T47D (cell line): ENCODE measurements at regions of chr3 and their contacts with region 1.

Region 1: GRCh38 chr3:193572426-193572908 is 17.8 kb upstream of the ATP13A4 start:
- DNase-seq: peak; percentile 72 to 93

Region 2: DNA sequence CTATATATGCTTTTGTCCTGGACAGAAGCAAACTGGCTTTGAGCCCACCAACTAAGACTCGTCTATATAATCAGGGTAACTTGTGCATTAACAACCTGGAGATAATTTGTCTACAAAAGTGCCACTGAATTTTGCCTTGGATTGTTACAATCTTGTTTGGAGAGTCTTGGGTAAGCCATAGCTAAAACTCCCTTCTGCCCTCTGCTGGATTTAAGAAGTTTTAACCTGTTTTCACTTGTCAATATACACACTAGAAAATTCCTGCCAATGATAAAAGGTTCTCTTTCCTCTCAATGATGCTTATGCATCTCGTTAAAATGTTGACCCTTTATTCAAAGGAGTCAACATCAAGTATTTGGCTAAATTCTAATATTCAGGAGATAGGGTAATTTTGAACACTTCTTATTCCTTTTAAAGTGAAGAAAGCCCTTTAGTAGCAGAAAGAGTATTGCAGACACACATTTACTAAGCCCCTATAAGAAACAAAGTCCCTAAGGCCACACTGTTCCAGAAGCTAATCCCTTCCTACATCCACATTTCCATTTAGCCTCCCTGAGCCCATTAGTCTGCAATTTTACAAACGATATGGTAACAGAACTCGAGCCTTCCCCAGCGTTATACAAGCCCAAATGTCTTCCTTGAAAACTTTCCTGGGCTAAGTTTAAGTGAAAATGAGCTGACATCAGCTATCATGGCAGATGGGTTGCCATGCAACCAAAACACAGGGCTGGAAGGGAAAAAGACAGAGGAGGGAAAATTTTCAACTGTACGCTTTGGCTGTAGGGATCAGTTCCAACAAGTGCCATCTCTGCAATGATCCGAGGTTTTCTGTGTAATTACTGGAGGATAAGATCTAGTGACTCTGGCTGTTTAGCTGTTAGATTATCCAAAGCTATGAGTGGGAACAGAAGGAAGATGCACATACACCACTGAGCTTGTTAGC is 769.2 kb before region 1 on chr3:
- in situ Hi-C with region 1: loop called (anchors 25 kb)
- DNase-seq: peak; percentile 80 to 82

Region 3: DNA sequence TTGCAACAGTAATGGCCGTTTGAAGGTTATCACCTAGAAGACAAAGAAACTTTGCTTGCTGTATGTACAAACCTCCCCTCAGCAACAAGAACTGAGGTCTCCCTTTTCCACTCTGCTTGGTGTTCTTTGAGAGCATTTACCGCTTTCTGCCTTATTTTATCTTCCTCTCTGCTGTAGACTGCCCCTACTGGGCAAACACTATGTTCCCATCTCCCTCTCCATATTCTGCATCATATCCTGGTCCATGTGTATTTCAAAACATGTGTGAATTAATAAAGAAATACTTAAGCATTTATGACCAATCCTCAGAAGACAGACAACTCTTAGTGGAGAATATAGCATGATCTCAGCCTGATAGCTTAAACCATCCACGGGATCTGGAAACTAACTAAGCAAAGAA is 258.3 kb before region 1 on chr3:
- in situ Hi-C with region 1: no loop called
- DNase-seq: no peak